ENCODE measurements at regions of chr1 and their contacts with region 1.

Region 1: DNA sequence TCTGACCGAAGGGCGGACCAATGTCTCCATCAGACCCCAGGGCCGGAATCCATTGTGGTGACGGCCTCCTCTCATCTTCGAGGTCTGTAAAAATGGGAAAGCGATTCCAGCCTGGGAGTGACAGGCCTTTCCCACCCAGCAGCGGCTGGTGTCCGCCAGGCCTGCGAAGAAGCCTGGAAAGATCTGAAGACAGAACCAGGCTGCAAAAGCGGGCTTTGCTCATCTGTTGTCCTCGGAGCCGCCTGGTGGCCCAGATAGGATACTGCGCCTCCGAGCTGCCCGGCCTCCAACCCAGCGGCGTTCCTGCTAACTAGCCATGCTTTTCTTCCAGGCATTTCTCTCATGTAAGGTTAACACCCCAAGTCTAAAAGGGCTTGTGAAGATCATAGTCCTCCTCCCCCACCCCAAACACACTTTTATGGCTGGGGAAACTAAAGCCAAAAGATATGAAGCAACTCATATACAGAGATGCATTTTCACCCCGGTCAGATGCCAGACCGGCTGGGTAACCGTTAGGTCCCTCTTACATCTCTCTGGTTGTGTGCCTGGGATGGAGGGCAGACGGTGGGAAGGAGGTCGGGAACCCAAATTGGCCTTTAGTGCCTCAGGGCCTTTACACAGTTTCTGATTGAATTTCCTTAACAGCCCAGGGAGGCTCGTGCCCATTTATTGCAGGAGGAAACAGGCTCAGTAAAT is 1.9 kb upstream of the DHRS3 start:
- DNase-seq: peak; percentile 73
- H3K4me3 Mint-ChIP-seq: peak overlapping the region; percentile 98
- H3K27ac Mint-ChIP-seq: no peak overlapping the region
- H3K4me1 Mint-ChIP-seq: peaks cover 37% of the 10 kb centered on the region
- H3K27me3 Mint-ChIP-seq: no peaks in the 10 kb centered on the region

Region 2: DNA sequence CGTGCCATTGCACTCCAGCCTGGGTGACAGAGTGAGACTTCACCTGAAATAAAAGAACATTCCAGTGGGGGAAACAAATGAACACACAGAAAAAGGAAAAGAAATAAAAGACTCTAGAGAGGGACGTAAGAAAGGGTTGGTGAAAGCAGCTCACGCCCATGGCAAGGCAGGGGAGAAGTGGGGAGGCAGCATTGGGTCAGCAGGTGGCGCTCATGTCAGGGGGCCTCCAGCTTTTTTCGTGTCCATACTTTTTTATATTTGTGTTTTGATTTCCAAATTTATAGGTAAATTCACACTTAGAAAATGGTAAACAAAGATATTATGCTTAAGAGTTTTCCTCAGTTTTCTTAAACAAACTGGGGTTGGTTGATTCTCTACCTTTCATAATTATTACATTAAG is 344.6 kb before region 1 on chr1:
- intact Hi-C with region 1: loop called (anchors 1 kb)
- DNase-seq: no peak
- H3K4me3 Mint-ChIP-seq: no peak overlapping the region
- H3K27ac Mint-ChIP-seq: no peak overlapping the region
- H3K4me1 Mint-ChIP-seq: no peaks in the 10 kb centered on the region
- H3K27me3 Mint-ChIP-seq: no peaks in the 10 kb centered on the region

Region 3: GRCh38 chr1:12344596-12345349 is 275.2 kb before region 1 on chr1:
- intact Hi-C with region 1: loop called (anchors 1 kb)
- DNase-seq: no peak
- H3K4me3 Mint-ChIP-seq: peak overlapping the region; percentile 61
- H3K27ac Mint-ChIP-seq: peak overlapping the region; percentile 88
- H3K4me1 Mint-ChIP-seq: peaks cover 53% of the 10 kb centered on the region
- H3K27me3 Mint-ChIP-seq: no peaks in the 10 kb centered on the region

Region 4: DNA sequence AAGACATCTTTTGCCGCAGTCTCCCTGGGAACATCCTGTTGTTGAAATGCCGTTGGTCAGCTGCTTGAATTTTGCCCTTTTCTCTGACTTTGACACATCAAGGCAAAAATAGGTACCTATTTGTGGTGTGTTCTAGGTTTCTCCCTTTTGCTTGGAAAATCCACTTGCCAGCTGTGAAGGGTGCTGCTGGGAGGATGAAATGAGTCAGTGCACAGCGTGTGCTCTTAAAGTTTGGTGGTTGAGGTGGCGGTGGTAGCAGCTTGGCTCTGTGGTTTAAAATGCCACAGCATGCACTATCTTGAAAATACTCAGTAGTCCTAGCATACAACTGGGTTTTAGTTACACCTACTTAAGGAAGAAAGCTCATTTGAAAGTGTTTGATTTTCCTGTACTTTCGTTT is 185.8 kb before region 1 on chr1:
- intact Hi-C with region 1: loop called (anchors 1 kb)
- DNase-seq: peak; percentile 57
- H3K4me3 Mint-ChIP-seq: no peak overlapping the region
- H3K27ac Mint-ChIP-seq: peak overlapping the region; percentile 56
- H3K4me1 Mint-ChIP-seq: peaks cover 61% of the 10 kb centered on the region
- H3K27me3 Mint-ChIP-seq: no peaks in the 10 kb centered on the region

Region 5: DNA sequence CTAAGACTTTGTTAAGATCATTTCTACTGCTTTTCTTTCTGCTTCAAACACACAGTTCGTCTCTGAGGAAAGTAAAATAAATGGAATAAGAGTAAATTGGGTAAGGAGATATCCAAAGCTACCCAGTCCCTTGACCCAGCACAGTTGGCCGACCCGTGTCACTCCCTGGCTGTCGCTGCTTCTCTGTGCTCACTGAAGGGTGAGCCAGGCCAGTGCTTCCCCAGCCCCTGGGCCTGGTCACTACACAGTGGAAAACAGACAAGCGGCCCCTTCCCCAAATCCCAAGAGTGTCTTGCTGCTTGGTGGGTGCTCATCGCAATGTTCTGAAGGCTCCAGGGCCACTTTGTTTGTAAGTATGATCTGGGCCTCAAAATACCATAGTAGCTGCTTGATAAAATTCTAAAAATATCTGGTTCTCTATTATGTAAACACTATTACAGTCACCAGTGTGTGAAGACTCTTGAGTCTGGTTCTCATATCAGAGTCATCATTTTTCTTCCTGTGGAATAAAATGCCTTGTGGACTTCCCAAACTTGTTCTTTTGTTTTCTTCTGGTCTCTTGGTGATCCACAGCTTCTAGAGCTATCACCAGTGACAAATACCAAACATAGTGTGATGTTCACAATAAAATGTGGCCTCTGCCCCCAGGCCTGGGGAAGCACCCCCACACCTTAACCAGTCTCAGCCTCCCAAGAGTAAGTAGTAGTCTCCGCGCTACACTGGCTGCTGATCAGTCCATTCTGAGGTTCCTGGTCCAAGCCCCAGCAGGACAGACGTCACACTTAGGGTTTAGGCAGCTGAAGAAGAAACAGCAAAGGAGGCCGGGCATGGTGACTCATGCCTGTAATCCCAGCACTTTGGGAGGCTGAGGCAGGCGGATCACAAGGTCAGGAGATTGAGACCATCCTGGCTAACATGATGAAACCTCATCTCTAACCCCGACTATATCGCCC is 108.1 kb before region 1 on chr1:
- intact Hi-C with region 1: loop called (anchors 1 kb)
- DNase-seq: no peak
- H3K4me3 Mint-ChIP-seq: peak overlapping the region; percentile 58
- H3K27ac Mint-ChIP-seq: peak overlapping the region; percentile 99
- H3K4me1 Mint-ChIP-seq: peaks cover 41% of the 10 kb centered on the region
- H3K27me3 Mint-ChIP-seq: no peaks in the 10 kb centered on the region

Region 6: GRCh38 chr1:12636098-12636950 is 16.4 kb after region 1 on chr1:
- intact Hi-C with region 1: no loop called
- DNase-seq: no peak
- H3K4me3 Mint-ChIP-seq: no peak overlapping the region
- H3K27ac Mint-ChIP-seq: no peak overlapping the region
- H3K4me1 Mint-ChIP-seq: peaks cover 3% of the 10 kb centered on the region
- H3K27me3 Mint-ChIP-seq: peaks cover 7% of the 10 kb centered on the region

Measured in activated T-helper 2 cell treated with anti-CD3 and anti-CD28 coated beads, Interferon-gamma antibody, Interleukin-2, Interleukin-4, amounts not matched to agents 10 μg/mL and 5 μg/mL and 100 μg/mL, durations not matched to agents 14 hours and 24 hours and 36 hours (primary cell).